Left cardiac atrium (tissue), 4 donors: ENCODE measurements at regions of chr2 and their contacts with region 1.

Region 1: DNA sequence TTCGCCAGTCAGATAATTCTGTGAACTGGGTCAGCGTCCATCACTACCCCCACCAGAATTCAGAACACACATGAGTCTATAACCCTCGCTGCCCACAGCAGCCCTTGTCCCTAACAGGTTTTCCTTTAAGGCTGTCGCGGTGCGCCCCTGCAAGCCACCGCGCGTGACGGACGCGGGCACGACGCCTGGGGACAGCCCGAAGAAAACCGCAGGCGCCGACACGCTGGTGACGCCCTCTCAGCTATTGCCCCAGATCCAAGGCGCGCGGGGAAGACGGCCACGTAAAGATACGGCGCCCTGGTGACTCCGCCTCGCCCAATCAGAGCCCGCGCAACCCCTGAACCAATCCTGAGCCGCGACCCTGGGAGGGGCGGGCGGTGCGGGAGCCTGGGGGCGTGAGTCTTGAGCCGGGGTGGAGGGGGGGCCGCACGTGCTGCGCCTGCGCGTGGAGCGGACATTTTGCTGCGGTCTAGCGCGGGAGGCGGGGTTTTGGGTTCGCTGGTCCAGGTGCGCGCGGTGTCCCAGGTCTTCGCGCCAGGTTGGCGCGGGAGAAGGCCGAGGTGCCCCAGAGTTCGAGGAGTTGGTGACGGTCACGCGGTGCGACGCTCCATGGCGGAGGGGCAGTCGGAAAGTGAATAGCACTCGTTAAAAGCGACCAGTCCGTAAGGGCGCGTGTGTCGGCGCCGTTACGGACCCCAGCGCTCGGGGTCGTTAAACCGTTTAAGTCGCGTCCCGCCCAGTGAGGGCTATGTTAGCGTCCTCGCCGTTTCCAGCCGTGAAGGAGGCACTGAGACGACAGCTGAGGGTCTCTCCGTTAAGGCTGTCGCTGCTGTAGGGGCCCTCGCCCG is 15.9 kb downstream of the NMUR1 start:
- DNase-seq: peak; percentile 99
- ATAC-seq: peak; percentile 100

Region 2: GRCh38 chr2:231557571-231558237 is 43.4 kb after region 1 on chr2:
- intact Hi-C with region 1: loop called (anchors 5 kb)
- DNase-seq: peak; percentile 62
- ATAC-seq: peak; percentile 94

Region 3: GRCh38 chr2:231604685-231605606 is 90.6 kb after region 1 on chr2:
- intact Hi-C with region 1: loop called in 1 of 2 experiments (anchors 5 kb)
- DNase-seq: peak; percentile 100
- ATAC-seq: peak; percentile 94

Region 4: DNA sequence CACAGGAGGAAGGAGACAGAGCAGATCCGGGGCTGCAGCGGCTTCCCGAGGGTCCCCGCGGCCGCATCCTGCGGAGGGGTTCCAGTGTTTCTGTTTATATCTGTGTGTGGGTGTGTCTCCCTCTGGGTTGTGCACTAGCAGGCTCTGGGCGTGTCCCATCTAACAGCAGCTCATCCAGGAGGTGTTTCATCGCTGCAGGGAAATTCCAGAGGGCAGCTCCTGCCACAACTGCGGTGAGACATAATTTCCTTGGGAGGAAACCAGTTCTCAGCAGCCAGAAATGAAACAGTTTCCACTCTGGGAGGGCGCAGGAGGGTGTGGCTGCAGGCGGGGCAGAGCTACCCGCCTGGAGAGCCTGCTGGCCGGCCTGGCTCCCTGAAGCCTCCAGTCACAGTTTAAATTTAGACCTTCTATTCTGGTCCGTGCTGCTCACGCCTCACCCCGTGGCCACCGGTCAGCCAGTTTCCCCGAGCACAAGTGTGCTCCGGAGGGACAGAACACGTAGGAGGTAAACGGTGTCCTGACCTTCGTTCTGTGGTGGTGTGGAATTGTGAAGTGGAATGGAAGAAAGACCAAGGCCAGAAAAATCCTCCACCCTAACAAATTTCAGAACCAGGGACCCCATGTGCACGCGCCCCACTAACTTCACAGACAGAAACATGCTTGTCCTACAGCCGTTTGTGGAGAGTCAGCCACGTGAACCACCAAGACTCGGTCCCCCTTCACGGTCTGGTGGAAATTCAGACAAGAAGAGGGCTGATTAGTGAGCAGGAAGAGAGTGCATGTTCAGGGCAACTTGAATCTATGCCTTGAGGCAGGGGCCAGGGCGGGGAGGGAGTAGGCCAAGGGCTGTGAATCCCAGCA is 128.5 kb after region 1 on chr2:
- intact Hi-C with region 1: no loop called
- DNase-seq: peak; percentile 92
- ATAC-seq: peak; percentile 93 to 96

Region 5: GRCh38 chr2:231666171-231667095 is 152.1 kb after region 1 on chr2:
- intact Hi-C with region 1: no loop called
- DNase-seq: peak; percentile 95
- ATAC-seq: peak; percentile 86 to 91